H1 (cell line): ENCODE measurements at regions of chr13 and their contacts with region 1.

Region 1: DNA sequence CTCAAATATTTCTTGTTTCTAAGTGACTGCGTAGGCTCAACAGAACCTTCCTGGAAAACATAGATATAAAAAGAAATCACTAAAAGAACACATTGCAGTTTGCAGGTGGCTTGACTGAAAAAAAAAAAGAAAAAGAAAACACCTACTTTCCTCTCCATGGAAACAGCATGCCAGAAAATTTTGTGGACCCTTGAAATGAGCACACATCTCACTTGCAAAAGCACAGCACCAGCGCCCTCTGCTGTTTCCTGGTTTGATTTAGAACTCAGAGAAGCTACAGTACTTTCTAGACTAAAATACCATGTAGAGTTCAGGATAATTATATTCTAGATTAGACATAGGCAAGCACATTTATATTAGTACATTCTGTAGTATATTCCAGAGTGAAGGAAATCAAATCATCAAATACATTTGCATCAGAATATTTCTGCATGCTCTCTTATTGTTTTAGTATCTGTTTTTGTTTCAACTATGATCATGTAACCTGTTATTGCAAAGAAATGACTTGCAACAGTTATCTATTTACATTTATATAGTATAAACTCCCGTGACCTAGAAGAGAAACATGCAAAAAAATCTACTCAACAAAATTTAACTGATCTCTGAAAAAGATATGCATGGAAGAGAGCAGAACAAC is 22.3 kb upstream of the XPO4 start:
- DNase-seq: peak in 1 of 2 experiments; percentile 88
- H3K4me3 ChIP-seq: no peak overlapping the region
- H3K27ac ChIP-seq: no peak overlapping the region
- H3K4me1 ChIP-seq: peaks cover 0 to 4% (median under 1%) of the 10 kb centered on the region in 4 experiments; a peak in 1 of 7 replicates
- H3K27me3 ChIP-seq: no peaks in the 10 kb centered on the region
- CTCF ChIP-seq: peak in 2 of 3 experiments; percentile 69 to 77; a peak in 3 of 4 replicates
- EP300 ChIP-seq: no peak
- POLR2A ChIP-seq: no peak
- RAD21 ChIP-seq: peak; percentile 92

Region 2: DNA sequence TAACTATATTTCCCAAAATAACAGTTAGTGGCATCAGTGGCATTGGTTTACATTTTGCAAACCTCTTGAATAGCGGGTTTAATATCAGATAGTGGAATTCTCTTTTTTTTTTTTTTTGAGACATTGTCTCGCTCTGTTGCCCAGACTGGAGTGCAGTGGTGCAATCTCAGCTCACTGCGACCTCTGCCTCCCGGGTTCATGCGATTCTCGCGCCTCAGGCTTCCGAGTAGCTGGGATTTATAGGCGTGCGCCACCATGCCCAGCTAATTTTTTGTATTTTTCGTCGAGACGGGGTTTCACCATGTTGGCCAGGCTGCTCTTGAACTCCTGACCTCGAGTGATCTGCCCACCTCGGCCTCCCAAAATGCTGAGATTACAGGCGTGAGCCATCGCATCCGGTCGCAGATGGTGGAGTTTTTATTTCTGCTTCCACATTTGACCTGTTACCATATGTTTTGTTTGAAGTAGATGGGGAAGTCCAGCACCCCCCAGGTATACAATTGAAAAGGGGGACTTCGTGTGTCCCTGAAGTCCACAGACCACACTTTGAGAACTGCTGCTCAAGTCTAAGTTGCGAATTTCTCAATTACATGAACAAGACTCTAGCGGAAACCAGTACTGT is 18.2 kb after region 1 on chr13:
- CTCF ChIA-PET with region 1: interaction called, 33 read pairs
- POLR2A ChIA-PET with region 1: no interaction called
- DNase-seq: no peak
- H3K4me3 ChIP-seq: no peak overlapping the region
- H3K27ac ChIP-seq: no peak overlapping the region
- H3K4me1 ChIP-seq: peaks cover 0 to 3% (median under 1%) of the 10 kb centered on the region in 4 experiments; a peak in 2 of 7 replicates
- H3K27me3 ChIP-seq: peaks cover 0 to 19% (median 10%) of the 10 kb centered on the region in 4 experiments; a peak in 6 of 7 replicates
- CTCF ChIP-seq: no peak
- EP300 ChIP-seq: no peak
- POLR2A ChIP-seq: no peak
- RAD21 ChIP-seq: no peak

Region 3: DNA sequence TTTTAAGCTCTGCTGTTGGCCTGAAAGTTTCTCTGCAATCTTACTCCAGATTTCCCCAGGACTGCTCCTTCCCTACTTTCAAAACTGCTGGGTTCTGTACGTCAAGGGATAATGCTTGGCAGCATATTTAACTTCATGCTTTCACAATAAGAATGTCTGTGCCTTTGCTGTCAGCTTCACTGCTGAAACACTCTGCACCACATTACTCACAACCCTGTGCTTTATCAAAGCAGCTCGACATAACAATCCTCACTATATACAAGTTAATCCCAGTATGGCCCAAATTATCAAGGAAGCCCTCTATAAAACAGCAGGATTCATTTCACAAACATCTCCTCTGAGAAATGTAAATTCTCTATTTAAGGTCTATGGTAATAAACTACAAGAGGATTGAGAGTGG is 119.0 kb after region 1 on chr13:
- CTCF ChIA-PET with region 1: no interaction called
- POLR2A ChIA-PET with region 1: no interaction called
- DNase-seq: no peak
- H3K4me3 ChIP-seq: no peak overlapping the region
- H3K27ac ChIP-seq: no peak overlapping the region
- H3K4me1 ChIP-seq: peaks cover 0 to 5% (median 3%) of the 10 kb centered on the region in 4 experiments; a peak in 4 of 7 replicates
- H3K27me3 ChIP-seq: no peaks in the 10 kb centered on the region
- CTCF ChIP-seq: no peak
- EP300 ChIP-seq: no peak
- POLR2A ChIP-seq: no peak
- RAD21 ChIP-seq: no peak